ENCODE measurements at regions of chr2 and their contacts with region 1.

Region 1: GRCh38 chr2:203830304-203831055 is 37.1 kb upstream of the CTLA4 start:
- DNase-seq: peak; percentile 83
- ATAC-seq: peak; percentile 95
- H3K4me3 Mint-ChIP-seq: peak overlapping the region; percentile 42
- H3K27ac Mint-ChIP-seq: peak overlapping the region; percentile 95
- H3K4me1 Mint-ChIP-seq: peaks cover 19% of the 10 kb centered on the region
- H3K27me3 Mint-ChIP-seq: no peaks in the 10 kb centered on the region

Region 2: GRCh38 chr2:203650860-203651613 is 179.4 kb before region 1 on chr2:
- CTCF ChIA-PET with region 1: no interaction called
- POLR2A ChIA-PET with region 1: no interaction called
- intact Hi-C with region 1: no loop called
- DNase-seq: peak; percentile 20
- ATAC-seq: peak; percentile 90
- H3K4me3 Mint-ChIP-seq: no peak overlapping the region
- H3K27ac Mint-ChIP-seq: no peak overlapping the region
- H3K4me1 Mint-ChIP-seq: peaks cover 20% of the 10 kb centered on the region
- H3K27me3 Mint-ChIP-seq: no peaks in the 10 kb centered on the region

Region 3: DNA sequence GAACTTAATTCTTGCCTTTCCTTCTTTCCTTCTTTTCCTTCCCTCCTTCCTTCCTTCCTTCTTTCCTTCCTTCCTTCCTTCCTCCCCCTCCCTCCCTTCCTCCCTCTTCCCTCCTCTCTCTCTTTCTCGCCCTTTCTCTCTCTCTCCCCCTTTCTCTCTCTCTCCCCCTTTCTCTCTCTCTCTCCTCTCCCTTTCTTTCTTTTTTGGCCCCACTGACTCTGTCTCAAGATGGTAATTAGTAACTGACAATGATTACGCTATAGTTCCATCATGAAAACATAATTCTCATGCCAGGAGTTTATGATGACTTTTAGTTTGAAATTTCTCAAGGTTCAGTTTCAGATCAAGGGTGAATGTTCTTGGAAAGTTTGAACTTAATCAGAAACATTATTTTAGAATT is 22.3 kb after region 1 on chr2:
- CTCF ChIA-PET with region 1: interaction called, 3 read pairs
- POLR2A ChIA-PET with region 1: interaction called, 3 read pairs
- intact Hi-C with region 1: loop called (anchors 1 kb)
- DNase-seq: no peak
- ATAC-seq: peak; percentile 53
- H3K4me3 Mint-ChIP-seq: peak overlapping the region; percentile 29
- H3K27ac Mint-ChIP-seq: peak overlapping the region; percentile 83
- H3K4me1 Mint-ChIP-seq: peaks cover 65% of the 10 kb centered on the region
- H3K27me3 Mint-ChIP-seq: no peaks in the 10 kb centered on the region

Region 4: GRCh38 chr2:203858176-203858575 is 27.7 kb after region 1 on chr2:
- CTCF ChIA-PET with region 1: interaction called, 3 read pairs
- POLR2A ChIA-PET with region 1: no interaction called
- intact Hi-C with region 1: loop called (anchors 1 kb)
- DNase-seq: peak; percentile 62
- ATAC-seq: peak; percentile 57
- H3K4me3 Mint-ChIP-seq: peak overlapping the region; percentile 15
- H3K27ac Mint-ChIP-seq: peak overlapping the region; percentile 66
- H3K4me1 Mint-ChIP-seq: peaks cover 85% of the 10 kb centered on the region
- H3K27me3 Mint-ChIP-seq: no peaks in the 10 kb centered on the region

Region 5: DNA sequence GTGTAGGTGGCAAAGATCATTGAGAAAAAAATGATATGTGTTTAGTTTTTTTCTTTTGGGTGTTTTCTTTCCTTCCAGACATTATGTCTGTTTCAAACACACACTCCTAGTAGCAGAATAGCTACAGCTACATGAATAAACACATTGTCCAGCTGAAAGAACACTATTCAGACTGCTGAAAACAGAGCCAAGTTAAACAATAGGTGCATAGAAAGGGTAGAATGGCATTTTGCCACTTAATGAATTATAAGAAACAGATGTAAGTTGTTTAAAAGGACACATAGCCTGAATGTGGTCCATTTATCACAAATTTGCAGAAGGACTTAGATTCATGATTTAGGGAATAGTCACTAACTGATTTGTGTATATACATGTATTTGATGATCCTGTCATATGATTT is 57.2 kb after region 1 on chr2:
- CTCF ChIA-PET with region 1: interaction called, 3 read pairs
- POLR2A ChIA-PET with region 1: interaction called, 3 read pairs
- intact Hi-C with region 1: loop called in 1 of 2 experiments (anchors 1 kb)
- DNase-seq: no peak
- ATAC-seq: no peak
- H3K4me3 Mint-ChIP-seq: no peak overlapping the region
- H3K27ac Mint-ChIP-seq: peak overlapping the region; percentile 68
- H3K4me1 Mint-ChIP-seq: peaks cover 67% of the 10 kb centered on the region
- H3K27me3 Mint-ChIP-seq: peaks cover 4% of the 10 kb centered on the region

Region 6: DNA sequence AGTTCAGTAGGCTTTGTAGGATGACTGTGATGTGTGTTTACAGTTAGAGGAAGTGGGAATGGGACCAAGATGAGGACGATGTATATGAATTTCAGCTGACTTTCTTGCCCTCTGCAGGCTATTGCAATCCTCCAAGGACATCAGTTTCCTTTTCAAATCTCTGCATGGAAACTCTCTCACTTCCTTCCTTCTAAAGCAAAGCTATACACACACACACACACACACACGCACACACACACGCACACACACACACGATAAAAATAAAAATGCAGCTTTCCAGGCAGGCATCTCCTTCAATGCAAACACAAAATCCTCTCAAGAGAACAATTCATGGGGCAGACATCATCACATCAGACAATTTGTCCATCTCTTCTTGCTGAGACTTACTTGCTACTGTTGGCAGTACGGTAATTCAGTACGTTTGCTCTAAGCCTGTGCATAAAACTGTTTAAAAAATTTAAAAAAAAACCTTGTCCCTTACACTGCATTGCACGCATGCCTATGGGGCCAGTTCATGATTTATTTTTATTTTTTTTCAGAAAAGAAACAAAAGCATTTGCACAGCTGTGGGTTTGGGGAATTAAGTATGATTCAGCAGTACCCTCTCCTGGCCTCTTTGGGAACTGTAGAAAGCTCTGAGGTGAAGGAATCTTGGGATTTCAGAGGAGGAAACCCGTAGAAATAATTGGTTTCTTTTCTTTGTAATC is 78.9 kb after region 1 on chr2:
- CTCF ChIA-PET with region 1: interaction called, 4 read pairs
- POLR2A ChIA-PET with region 1: no interaction called
- intact Hi-C with region 1: loop called in 1 of 2 experiments (anchors 1 kb)
- DNase-seq: peak; percentile 44
- ATAC-seq: peak; percentile 72
- H3K4me3 Mint-ChIP-seq: peak overlapping the region; percentile 0
- H3K27ac Mint-ChIP-seq: peak overlapping the region; percentile 44
- H3K4me1 Mint-ChIP-seq: peaks cover 30% of the 10 kb centered on the region
- H3K27me3 Mint-ChIP-seq: peaks cover 2% of the 10 kb centered on the region

Measured in activated CD4-positive, alpha-beta T cell treated with anti-CD3 and anti-CD28 coated beads for 36 hours (primary cell).